ENCODE measurements at regions of chr19 and their contacts with region 1.

Region 1: DNA sequence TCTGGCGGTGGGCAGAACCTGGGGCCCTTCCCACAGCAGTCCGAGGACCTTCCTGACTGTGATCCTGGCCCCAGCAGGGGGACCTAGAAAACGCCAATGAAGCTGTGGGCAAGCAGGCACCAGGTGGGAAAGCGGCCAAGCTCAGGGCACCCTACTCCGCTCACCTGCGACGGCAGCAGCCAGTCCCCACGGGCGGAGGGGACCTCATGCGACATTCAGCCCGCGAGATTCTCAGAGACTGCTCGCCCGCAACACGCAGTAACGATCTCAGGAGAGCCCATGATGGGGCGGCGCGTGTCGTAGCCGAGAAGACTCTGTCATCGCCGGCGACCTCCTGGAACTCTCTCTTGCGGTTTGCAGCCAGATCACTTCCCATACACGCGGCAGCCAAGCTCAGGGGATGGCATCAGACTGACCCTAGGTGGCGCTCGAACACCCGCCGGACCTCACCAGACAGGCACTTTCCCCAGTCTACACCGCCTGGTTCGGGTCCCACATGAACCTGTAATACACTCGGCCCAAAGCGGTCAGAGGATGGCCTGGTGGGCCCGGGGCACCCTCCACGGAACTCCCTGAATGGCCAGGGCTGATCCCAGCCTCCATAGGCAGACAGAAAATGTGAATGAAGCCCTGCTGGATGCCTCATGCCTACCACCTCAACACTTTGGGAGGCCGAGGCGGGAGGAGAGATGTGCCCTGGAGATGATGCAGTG is 26.5 kb downstream of the MAN2B1 start:
- DNase-seq: peak; percentile 77 to 93
- H3K4me3 ChIP-seq: peak overlapping the region; percentile 11 to 53 (median 42); a peak in 6 of 8 replicates
- H3K27ac ChIP-seq: no peak overlapping the region
- H3K4me1 ChIP-seq: no peaks in the 10 kb centered on the region; a peak in 2 of 7 replicates
- H3K27me3 ChIP-seq: no peaks in the 10 kb centered on the region
- CTCF ChIP-seq: peak; percentile 75 to 99 (median 94)
- EP300 ChIP-seq: no peak
- POLR2A ChIP-seq: peak in 1 of 2 experiments; percentile 56; a peak in 1 of 3 replicates
- RAD21 ChIP-seq: peak; percentile 56 to 65

Region 2: DNA sequence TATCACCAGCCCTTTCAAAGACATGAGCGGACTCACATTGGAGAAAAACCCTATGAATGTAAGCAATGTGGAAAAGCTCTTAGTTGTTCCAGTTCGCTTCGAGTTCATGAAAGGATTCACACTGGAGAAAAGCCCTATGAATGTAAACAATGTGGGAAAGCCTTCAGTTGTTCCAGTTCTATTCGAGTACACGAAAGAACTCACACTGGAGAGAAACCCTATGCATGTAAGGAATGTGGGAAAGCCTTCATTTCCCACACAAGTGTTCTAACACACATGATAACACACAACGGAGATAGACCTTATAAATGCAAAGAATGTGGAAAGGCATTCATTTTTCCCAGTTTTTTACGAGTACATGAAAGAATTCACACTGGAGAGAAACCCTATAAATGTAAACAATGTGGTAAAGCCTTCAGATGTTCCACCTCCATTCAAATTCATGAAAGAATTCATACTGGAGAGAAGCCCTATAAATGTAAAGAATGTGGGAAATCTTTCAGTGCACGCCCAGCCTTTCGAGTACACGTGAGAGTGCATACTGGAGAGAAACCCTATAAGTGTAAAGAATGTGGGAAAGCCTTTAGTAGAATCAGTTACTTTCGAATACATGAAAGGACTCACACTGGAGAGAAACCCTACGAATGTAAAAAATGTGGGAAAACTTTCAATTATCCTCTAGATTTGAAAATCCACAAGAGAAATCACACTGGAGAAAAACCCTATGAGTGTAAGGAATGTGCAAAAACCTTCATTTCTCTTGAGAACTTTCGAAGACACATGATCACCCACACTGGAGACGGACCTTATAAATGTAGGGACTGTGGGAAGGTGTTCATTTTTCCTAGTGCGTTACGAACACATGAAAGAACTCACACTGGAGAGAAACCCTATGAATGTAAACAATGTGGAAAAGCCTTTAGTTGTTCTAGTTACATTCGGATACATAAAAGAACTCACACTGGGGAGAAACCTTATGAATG is 11.7 kb before region 1 on chr19:
- CTCF ChIA-PET with region 1: interaction called, 14 read pairs
- POLR2A ChIA-PET with region 1: interaction called, 4 read pairs
- DNase-seq: no peak
- H3K4me3 ChIP-seq: peak overlapping the region in 1 of 4 experiments; percentile 17; a peak in 1 of 8 replicates
- H3K27ac ChIP-seq: no peak overlapping the region
- H3K4me1 ChIP-seq: no peaks in the 10 kb centered on the region
- H3K27me3 ChIP-seq: no peaks in the 10 kb centered on the region
- CTCF ChIP-seq: no peak
- EP300 ChIP-seq: no peak
- POLR2A ChIP-seq: no peak
- RAD21 ChIP-seq: no peak

Region 3: GRCh38 chr19:12656899-12657571 is 17.0 kb after region 1 on chr19:
- CTCF ChIA-PET with region 1: interaction called, 11 read pairs
- POLR2A ChIA-PET with region 1: interaction called, 5 read pairs
- DNase-seq: peak; percentile 91 to 95
- H3K4me3 ChIP-seq: peak overlapping the region in 1 of 4 experiments; percentile 20; a peak in 3 of 8 replicates
- H3K27ac ChIP-seq: no peak overlapping the region; the same call in 1 of the 2 replicates
- H3K4me1 ChIP-seq: peaks cover 0 to 6% (median 3%) of the 10 kb centered on the region in 4 experiments; a peak in 5 of 7 replicates
- H3K27me3 ChIP-seq: no peaks in the 10 kb centered on the region
- CTCF ChIP-seq: peak; percentile 49 to 67 (median 54)
- EP300 ChIP-seq: no peak
- POLR2A ChIP-seq: no peak
- RAD21 ChIP-seq: peak; percentile 50 to 55; a peak in 3 of 4 replicates

Region 4: GRCh38 chr19:12705654-12706331 is 65.7 kb after region 1 on chr19:
- CTCF ChIA-PET with region 1: no interaction called
- POLR2A ChIA-PET with region 1: no interaction called
- DNase-seq: no peak
- H3K4me3 ChIP-seq: no peak overlapping the region
- H3K27ac ChIP-seq: no peak overlapping the region
- H3K4me1 ChIP-seq: peaks cover 0 to 5% (median 2%) of the 10 kb centered on the region in 4 experiments; a peak in 2 of 7 replicates
- H3K27me3 ChIP-seq: no peaks in the 10 kb centered on the region
- CTCF ChIP-seq: no peak
- EP300 ChIP-seq: no peak
- POLR2A ChIP-seq: no peak
- RAD21 ChIP-seq: no peak

Region 5: DNA sequence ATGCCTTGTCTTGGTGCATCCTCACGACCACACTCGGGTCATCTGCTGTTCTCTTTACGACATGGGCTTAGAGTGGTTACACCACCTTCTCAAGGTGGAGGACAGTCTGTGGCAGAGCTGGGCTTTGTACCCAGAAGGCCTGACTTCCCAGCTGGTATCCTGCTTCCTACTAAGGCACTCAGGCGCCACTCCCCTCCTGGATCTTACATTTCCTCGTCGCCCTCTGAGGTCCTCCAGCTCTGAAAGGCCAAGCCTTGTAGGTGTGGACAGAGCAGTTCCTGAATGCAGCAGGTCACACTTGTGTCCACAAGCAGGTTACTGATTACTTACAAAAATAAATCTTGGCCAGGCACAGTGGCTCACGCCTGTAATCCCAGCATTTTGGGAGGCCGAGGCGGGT is 267.1 kb after region 1 on chr19:
- CTCF ChIA-PET with region 1: no interaction called
- POLR2A ChIA-PET with region 1: no interaction called
- DNase-seq: no peak
- H3K4me3 ChIP-seq: no peak overlapping the region
- H3K27ac ChIP-seq: no peak overlapping the region
- H3K4me1 ChIP-seq: peaks cover 0 to 1% (median under 1%) of the 10 kb centered on the region in 4 experiments; a peak in 2 of 7 replicates
- H3K27me3 ChIP-seq: no peaks in the 10 kb centered on the region
- CTCF ChIP-seq: no peak
- EP300 ChIP-seq: no peak
- POLR2A ChIP-seq: no peak
- RAD21 ChIP-seq: no peak